Mammary epithelial cell (primary cell): ENCODE measurements at regions of chr19 and their contacts with region 1.

Region 1: DNA sequence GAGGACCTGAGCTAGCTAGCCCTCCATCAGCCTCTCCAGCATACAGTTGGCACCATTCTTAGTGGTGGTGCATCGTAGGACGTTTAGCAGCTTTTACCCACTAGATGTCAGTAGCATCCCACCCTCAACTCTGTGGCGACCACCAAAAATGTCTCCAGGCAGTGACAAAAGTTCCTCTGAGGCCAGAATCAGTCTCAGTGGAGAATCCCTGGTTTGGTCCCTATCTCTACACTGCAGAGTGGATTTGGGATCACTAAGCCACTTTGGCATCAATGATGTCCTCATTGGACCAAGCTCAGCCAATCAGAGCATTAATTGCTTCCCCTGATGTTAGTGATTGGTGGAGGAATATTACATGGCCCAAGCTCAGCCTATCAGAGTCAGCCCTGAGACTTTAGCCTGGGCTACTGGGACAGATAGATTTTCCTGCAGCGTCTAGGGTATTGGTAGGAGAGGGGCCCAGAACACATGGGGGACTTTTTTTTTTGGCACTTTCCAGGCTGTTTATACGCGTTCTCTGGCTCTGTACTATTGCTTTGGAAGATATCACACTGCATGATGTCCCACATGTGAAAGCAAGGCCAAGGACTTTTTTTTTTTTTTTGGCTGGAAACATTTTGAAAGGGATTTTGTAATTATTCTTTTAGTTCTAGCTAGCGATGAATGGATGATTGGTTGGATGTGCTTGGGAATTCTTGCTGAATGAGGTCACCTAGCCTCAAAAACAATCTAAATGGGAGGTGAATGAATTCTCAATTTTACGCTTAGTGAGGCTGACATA is 7.0 kb downstream of the TMEM221 start:
- DNase-seq: peak; percentile 16
- H3K4me3 ChIP-seq: no peak overlapping the region
- H3K27ac ChIP-seq: no peak overlapping the region
- H3K4me1 ChIP-seq: no peaks in the 10 kb centered on the region
- H3K27me3 ChIP-seq: no peaks in the 10 kb centered on the region
- CTCF ChIP-seq: peak; percentile 45 to 49

Region 2: GRCh38 chr19:17579661-17580244 is 138.3 kb after region 1 on chr19:
- CTCF ChIA-PET with region 1: no interaction called
- dilution Hi-C with region 1: no loop called
- in situ Hi-C with region 1: no loop called
- intact Hi-C with region 1: loop called (anchors 1 kb)
- DNase-seq: peak; percentile 24
- H3K4me3 ChIP-seq: no peak overlapping the region
- H3K27ac ChIP-seq: no peak overlapping the region
- H3K4me1 ChIP-seq: no peaks in the 10 kb centered on the region
- H3K27me3 ChIP-seq: no peaks in the 10 kb centered on the region
- CTCF ChIP-seq: no peak